ENCODE measurements at regions of chr10 and their contacts with region 1.

Region 1: DNA sequence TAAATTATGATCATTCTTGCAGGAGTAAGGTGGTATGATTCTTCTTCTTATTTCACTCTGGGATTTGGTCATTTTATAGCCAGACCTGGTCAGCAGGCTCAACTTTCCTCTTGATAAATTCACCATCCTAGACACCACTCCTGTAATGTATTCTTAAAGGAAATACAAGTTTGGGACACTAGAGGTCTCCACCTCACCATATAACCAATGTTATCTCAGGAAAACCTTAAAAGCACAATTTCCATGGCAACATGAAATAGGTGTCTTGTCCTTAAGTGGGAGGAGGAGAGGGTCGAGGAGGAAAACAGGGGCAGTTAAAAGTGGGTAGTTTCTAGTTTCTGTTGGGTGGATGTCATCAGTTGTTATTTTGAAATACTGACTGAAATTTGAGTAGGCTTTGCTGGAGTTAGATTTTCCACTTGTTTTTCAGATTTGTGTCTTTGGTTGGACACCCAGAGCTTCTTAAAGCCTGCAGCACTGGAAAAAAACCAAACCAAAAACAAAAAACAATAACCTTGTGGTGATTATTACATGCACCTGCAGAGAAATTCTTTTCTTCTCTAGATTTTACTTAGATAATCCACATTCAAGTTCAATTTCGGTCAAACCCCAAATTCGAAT is 163.1 kb downstream of the PRKCQ start:
- DNase-seq: no peak
- ATAC-seq: peak; percentile 68

Region 2: GRCh38 chr10:6482737-6483357 is 65.8 kb after region 1 on chr10:
- intact Hi-C with region 1: no loop called
- DNase-seq: no peak
- ATAC-seq: no peak

Region 3: DNA sequence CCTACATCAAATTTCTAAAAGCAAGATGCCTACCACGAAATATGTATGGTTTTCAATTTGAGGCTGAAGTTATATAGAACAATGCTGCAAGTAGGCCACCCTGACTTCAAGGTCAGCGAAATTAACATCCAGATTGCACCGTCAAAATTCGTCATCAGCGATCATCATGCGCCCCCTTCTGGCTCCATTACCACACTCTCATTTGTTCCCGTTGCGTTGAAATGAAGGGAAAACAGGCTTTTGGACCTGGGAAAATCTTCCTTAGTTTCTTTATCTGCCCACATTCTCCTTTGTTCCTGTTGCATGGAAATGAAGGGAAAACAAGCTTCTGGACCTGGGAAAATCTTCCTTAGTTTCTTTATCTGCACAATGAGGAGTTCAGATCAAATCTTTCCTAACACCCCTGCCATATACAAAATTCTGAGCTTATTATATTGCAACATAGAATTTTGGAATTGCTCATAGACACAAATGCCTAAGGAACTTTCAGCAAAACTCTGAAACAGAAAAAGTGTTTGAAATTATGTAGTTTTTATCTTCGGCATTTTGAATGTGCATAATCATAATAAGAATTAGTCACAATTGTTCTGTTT is 261.3 kb after region 1 on chr10:
- intact Hi-C with region 1: loop called (anchors 10 kb)
- DNase-seq: peak; percentile 45
- ATAC-seq: peak; percentile 56

Measured in Right ventricle myocardium superior (tissue), 1 donor.